PC-9 (cell line): ENCODE measurements at regions of chr11 and their contacts with region 1.

Region 1: DNA sequence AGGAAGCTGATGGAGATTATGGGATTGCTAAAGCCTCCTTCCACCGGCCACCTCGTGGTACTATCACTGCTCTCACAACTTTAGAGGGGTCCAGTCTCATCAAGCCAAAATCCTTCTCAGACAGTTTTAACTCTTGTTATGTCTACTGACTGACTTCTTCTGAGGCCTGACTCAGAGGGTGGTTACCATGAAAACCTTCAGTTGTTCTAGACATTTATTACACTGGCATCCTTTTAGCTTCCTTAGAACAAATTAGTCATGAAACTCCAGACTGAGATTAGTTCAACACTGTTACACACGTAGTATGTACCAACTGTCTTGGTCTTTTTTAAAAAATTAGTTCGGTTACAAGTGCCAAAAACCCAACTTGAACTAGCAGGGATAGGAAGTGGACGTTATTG is 7.5 kb downstream of the DIXDC1 start:
- DNase-seq: peak in 1 of 2 experiments; percentile 59
- H3K4me3 ChIP-seq: no peak overlapping the region
- H3K27ac ChIP-seq: 0 out of 2 replicates have a peak overlapping the region, but pooled peaks have one; percentile 7
- H3K4me1 ChIP-seq: peaks cover 14% of the 10 kb centered on the region; the same call in 1 of the 2 replicates
- H3K27me3 ChIP-seq: no peaks in the 10 kb centered on the region
- CTCF ChIP-seq: no peak

Region 2: DNA sequence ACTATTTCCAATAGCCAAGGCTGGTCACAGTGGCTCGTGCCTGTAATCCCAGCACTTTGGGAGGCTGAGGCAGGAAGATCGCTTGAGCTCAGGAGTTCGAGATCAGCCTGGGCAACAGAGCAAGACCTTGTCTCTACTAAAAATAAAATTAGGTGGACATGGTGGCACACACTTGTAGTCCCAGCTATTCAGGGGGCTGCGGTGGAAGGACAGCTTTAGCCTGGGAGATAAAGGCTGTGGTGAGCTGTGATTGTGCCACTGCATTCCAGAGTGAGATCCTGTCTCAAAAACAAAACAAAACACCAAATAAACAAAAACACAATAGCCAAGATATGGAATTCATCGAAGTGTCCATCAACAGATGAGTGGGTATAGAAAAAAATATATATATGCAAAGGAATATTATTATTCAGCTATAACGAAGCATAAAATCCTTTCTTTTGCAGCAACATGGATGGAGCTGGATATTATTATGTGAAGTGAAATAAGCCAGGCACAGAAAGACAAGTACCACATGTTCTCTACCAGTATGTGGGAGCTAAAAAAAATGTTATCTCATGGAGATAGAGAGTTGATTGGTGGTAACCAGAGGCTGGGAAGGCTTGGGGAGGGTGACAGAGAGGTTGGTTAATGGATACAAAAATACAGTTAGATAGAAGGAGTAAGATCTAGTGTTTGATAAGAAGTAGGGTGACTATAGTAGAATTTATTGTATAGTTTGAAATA is 58.0 kb after region 1 on chr11:
- CTCF ChIA-PET with region 1: interaction called, 10 read pairs
- POLR2A ChIA-PET with region 1: no interaction called
- intact Hi-C with region 1: no loop called
- DNase-seq: no peak
- H3K4me3 ChIP-seq: no peak overlapping the region
- H3K27ac ChIP-seq: no peak overlapping the region
- H3K4me1 ChIP-seq: 0 out of 2 replicates have a peak, but pooled peaks cover 2% of the 10 kb centered on the region
- H3K27me3 ChIP-seq: no peaks in the 10 kb centered on the region
- CTCF ChIP-seq: no peak

Region 3: DNA sequence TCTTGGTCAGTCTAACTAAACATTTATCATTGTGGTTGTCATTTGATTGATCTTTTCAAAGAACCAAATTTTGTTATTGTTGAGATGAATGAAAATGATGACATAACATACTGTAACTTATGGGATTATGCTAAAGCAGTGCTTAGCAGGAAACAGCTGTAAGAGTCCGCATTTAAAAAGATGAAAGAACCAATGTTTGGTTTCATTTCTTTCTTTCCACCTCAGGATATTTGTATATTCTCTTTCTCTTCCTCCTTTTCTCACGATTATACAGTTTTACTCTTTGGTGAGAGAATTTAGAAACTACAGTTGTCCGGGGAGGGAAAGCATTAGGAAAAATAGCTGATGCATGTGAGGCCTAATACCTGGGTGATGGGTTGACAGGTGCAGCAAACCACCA is 106.1 kb after region 1 on chr11:
- CTCF ChIA-PET with region 1: no interaction called
- POLR2A ChIA-PET with region 1: interaction called, 16 read pairs
- intact Hi-C with region 1: no loop called
- DNase-seq: no peak
- H3K4me3 ChIP-seq: no peak overlapping the region
- H3K27ac ChIP-seq: no peak overlapping the region
- H3K4me1 ChIP-seq: peaks cover 12% of the 10 kb centered on the region
- H3K27me3 ChIP-seq: no peaks in the 10 kb centered on the region
- CTCF ChIP-seq: no peak